AG04449 (cell line): ENCODE measurements at regions of chr1 and their contacts with region 1.

Region 1: GRCh38 chr1:209850342-209850979 is 22.7 kb downstream of the UTP25 start:
- DNase-seq: peak; percentile 77
- H3K4me3 ChIP-seq: no peak overlapping the region
- CTCF ChIP-seq: peak; percentile 86

Region 2: GRCh38 chr1:209839875-209840491 is 10.5 kb before region 1 on chr1:
- CTCF ChIA-PET with region 1: interaction called, 133 read pairs
- POLR2A ChIA-PET with region 1: interaction called, 4 read pairs
- DNase-seq: peak; percentile 87
- H3K4me3 ChIP-seq: no peak overlapping the region; the same call in 1 of the 2 replicates
- CTCF ChIP-seq: no peak

Region 3: GRCh38 chr1:209870151-209870831 is 19.8 kb after region 1 on chr1:
- CTCF ChIA-PET with region 1: interaction called, 16 read pairs
- POLR2A ChIA-PET with region 1: no interaction called
- DNase-seq: no peak
- H3K4me3 ChIP-seq: no peak overlapping the region
- CTCF ChIP-seq: no peak

Region 4: DNA sequence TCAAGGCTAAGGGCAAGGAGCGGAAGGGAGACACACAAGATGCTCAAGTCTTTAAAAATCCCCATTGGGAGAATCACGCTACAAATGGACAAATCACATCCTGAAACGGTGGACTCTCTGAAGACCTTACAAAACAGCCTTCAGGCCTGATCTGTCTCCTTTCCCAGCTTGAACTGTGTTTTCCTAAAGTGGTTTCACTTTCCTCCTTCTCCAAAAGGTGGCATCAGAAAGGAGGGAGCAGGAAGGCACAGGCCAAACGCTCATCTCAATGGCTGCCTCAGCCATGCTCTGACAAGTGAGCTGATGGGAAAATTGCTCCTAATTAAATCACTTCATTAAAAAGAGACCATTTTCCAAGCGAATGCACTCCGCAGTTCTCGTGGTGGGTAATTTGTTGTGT is 25.1 kb after region 1 on chr1:
- CTCF ChIA-PET with region 1: interaction called, 15 read pairs
- POLR2A ChIA-PET with region 1: no interaction called
- DNase-seq: peak; percentile 36
- H3K4me3 ChIP-seq: peak overlapping the region; percentile 19; the same call in 1 of the 2 replicates
- CTCF ChIP-seq: peak; percentile 78